ENCODE measurements at regions of chr9 and their contacts with region 1.

Region 1: DNA sequence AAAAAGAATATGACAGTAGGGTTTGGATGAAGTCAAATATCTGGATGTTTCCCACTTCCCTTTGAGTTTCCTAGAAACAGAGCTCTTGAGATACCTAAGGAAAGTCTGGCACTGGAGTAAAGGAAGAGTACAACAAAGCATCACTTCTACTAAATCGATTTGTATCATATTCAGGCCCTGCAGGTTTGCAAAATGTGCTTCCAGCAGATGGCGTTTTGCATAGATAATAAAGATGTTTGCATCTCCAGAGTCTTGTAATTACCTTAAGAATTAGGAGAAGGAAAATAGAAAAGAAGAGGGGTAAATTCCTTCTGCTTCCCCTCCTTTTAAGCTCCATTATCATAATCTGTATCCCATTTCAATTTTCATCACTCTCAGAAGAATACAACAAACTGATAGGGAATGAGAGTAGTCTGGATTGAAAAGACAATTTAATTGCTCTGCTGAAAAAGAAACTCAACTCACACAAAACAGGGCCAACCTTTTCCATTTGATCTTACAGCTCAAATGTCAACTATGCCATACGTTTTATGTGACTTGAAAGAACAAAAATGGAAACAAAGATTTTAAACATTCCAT is 380.4 kb downstream of the PTPRD start:
- DNase-seq: no peak
- ATAC-seq: no peak
- H3K4me3 ChIP-seq: no peak overlapping the region
- H3K27ac ChIP-seq: no peak overlapping the region
- H3K4me1 ChIP-seq: no peaks in the 10 kb centered on the region
- H3K27me3 ChIP-seq: no peaks in the 10 kb centered on the region

Region 2: GRCh38 chr9:10173561-10173960 is 58.9 kb before region 1 on chr9:
- intact Hi-C with region 1: loop called in 1 of 2 experiments (anchors 10 kb)
- DNase-seq: no peak
- ATAC-seq: no peak
- H3K4me3 ChIP-seq: no peak overlapping the region
- H3K27ac ChIP-seq: no peak overlapping the region
- H3K4me1 ChIP-seq: no peaks in the 10 kb centered on the region
- H3K27me3 ChIP-seq: no peaks in the 10 kb centered on the region

Region 3: GRCh38 chr9:10899509-10899908 is 667.1 kb after region 1 on chr9:
- intact Hi-C with region 1: no loop called
- DNase-seq: no peak
- ATAC-seq: no peak
- H3K4me3 ChIP-seq: no peak overlapping the region
- H3K27ac ChIP-seq: no peak overlapping the region
- H3K4me1 ChIP-seq: no peaks in the 10 kb centered on the region
- H3K27me3 ChIP-seq: no peaks in the 10 kb centered on the region